Transverse colon (tissue), 4 donors: ENCODE measurements at regions of chr1 and their contacts with region 1.

Region 1: DNA sequence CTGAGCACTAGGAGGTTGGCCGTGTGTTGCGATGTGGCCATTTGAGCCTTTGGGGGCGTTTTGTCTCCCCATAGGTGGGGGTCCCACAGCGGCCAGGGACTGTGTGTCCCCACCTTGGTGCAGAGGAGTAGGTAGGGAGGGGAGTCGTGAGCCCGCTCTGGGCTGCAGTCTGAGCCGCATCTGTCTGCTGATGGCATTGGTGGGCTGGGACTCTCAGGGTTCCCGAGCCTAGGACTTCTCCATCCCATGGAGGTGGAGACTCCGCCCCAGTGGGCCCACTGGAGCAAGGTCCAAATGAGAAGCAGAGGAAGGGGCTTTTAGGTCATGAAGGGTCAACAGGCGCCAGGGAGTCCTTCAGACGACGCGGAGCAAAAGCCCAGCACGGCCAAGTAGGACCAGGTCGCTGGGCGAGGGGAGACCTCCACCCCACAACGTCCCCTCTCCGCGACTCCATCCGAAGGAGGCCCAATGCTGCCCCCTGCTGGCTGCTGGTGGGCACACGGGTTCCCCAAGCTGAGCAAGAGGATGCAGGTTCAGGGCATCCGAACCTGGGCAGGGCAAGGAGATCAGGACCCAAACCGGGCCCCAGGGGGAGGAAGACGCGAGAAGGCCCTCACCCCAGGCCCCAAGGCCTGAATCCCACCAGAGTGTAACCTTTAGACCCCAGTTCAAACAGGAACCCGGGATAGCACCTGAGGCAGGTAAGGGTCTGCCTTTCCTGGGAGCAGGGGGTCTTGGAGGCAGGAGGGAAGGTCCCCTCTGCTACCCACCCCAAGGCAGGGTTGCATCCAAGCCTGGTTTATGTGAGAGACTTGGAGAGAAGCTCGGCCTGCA is 14.9 kb downstream of the TTC34 start:
- DNase-seq: peak; percentile 57
- H3K4me3 ChIP-seq: no peak overlapping the region
- H3K27ac ChIP-seq: no peak overlapping the region
- H3K4me1 ChIP-seq: no peaks in the 10 kb centered on the region
- H3K27me3 ChIP-seq: peaks cover 55% of the 10 kb centered on the region
- CTCF ChIP-seq: peak; percentile 64 to 77 (median 72)
- EP300 ChIP-seq: no peak
- POLR2A ChIP-seq: no peak

Region 2: DNA sequence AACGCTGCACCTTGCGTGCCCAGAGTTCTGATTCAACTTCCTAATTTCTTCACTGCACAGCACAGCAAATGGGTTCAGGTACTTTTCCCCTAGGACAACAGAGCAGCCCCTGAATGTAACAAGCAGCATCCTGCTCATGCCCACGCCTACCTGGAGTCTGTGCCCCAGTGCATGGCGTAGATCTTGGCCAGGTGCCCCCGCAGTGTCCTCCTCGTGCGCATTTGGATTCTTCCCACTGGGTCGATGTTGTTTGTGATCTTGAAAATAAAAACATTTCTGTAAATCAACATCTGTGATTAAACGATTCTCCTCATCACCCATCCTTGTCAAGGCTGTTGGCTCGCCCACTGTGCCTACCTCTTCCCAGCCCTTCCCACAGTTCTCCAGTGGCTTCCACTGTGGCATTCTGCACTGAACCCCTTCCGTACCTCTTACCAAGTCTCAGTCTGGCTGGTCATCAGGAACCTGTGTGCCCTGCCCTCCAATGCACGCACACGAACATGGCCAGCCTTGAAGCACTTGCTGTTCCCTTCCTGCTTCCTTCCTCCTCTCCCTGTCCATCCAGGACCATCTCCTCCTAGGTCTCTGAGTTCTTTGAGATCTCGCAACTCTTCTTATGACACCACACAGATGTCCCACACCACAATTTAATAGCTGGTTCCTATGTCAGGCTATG is 970.8 kb before region 1 on chr1:
- in situ Hi-C with region 1: no loop called
- intact Hi-C with region 1: no loop called
- DNase-seq: no peak
- H3K4me3 ChIP-seq: no peak overlapping the region
- H3K27ac ChIP-seq: no peak overlapping the region
- H3K4me1 ChIP-seq: no peaks in the 10 kb centered on the region
- H3K27me3 ChIP-seq: no peaks in the 10 kb centered on the region
- CTCF ChIP-seq: no peak
- EP300 ChIP-seq: no peak
- POLR2A ChIP-seq: no peak

Region 3: GRCh38 chr1:2429780-2430591 is 356.6 kb before region 1 on chr1:
- in situ Hi-C with region 1: no loop called
- intact Hi-C with region 1: loop called (anchors 10 kb)
- DNase-seq: no peak
- H3K4me3 ChIP-seq: no peak overlapping the region
- H3K27ac ChIP-seq: no peak overlapping the region
- H3K4me1 ChIP-seq: no peaks in the 10 kb centered on the region
- H3K27me3 ChIP-seq: peaks cover 36% of the 10 kb centered on the region
- CTCF ChIP-seq: peak in 2 of 5 experiments; percentile 15 to 30
- EP300 ChIP-seq: no peak
- POLR2A ChIP-seq: no peak